ENCODE measurements at regions of chr1 and their contacts with region 1.

Region 1: DNA sequence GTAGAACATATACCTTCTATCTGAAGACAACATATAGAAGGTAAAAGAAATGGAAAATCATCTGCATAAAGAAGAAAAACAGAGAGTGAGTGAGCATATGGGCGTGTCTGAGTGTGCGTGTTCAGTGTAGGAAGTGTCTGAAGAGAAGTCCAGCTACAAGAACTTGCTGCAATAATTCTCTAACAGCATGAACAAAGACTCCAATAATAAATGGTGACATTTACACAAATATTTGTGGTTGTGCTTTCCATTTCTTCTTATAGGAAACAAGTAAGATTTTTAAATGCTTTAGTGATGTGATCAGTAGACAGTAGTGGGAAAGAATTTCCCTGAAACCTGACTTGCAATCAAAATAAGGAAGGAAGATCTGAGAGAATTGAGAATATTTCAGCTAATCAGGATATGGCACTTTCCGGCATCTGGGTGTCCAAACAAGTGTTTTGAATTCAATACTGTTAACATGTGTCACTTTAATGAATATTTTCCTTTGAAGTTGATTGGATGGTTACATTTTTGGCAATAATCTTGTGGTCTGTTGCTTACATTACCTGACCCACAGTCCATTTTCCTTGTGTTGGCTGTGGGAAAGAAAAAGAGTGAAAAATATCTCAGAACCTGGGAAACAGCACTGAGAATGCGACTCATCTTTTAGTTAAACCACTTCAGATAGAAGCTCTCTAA is 154.0 kb downstream of the TGFB2 start:
- DNase-seq: peak; percentile 63
- H3K4me3 Mint-ChIP-seq: peak overlapping the region; percentile 59
- H3K27ac Mint-ChIP-seq: peak overlapping the region; percentile 93
- H3K4me1 Mint-ChIP-seq: peaks cover 35% of the 10 kb centered on the region
- H3K27me3 Mint-ChIP-seq: no peaks in the 10 kb centered on the region
- CTCF ChIP-seq: no peak

Region 2: DNA sequence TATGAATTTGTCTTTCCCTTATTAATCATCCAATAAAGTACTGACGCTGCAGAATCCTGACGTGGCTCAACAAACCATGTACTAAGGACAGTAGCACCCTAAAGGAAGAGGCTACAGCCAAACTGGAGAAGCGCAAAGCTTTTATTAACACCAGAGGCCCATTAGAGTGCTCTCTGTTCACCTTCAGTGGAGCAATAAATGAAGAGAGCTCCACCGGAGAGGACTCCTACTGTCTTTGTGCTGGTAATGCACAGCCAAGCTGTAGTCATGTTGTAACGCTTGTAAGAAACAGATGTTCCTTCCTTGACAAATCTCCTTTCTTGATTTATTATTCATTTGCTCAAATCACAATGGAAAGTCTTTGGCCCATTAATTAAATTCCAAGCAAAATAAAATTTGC is 434.7 kb before region 1 on chr1:
- CTCF ChIA-PET with region 1: no interaction called
- POLR2A ChIA-PET with region 1: no interaction called
- intact Hi-C with region 1: no loop called
- DNase-seq: no peak
- H3K4me3 Mint-ChIP-seq: no peak overlapping the region
- H3K27ac Mint-ChIP-seq: no peak overlapping the region
- H3K4me1 Mint-ChIP-seq: no peaks in the 10 kb centered on the region
- H3K27me3 Mint-ChIP-seq: peaks cover 71% of the 10 kb centered on the region
- CTCF ChIP-seq: no peak

Region 3: DNA sequence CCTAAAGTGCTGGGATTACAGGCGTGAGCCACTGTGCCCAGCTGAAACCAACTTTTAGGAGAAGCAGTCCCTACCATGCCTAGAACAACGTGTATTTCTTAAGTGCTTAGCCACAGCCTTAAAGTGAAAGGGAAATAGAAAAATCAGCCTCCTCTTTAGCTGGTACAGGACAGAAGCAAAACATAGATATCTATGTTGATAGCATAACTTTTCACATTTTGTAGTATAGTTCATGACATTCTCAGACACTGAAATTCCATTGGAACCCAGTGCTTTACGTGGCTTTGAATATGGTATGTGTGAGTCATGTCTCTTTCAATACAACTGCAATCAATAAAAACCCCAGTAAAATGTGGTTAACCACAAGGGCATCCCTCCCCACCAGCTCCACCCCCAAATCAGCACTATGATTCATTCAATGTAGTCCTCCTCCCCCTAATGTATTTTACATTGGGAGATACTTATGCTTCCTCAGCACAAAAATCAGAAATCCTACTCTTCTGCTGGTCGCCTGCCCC is 121.9 kb before region 1 on chr1:
- CTCF ChIA-PET with region 1: interaction called, 6 read pairs
- POLR2A ChIA-PET with region 1: interaction called, 6 read pairs
- intact Hi-C with region 1: loop called (anchors 1 kb)
- DNase-seq: peak; percentile 99
- H3K4me3 Mint-ChIP-seq: peak overlapping the region; percentile 39
- H3K27ac Mint-ChIP-seq: peak overlapping the region; percentile 88
- H3K4me1 Mint-ChIP-seq: peaks cover 74% of the 10 kb centered on the region
- H3K27me3 Mint-ChIP-seq: no peaks in the 10 kb centered on the region
- CTCF ChIP-seq: no peak

Region 4: DNA sequence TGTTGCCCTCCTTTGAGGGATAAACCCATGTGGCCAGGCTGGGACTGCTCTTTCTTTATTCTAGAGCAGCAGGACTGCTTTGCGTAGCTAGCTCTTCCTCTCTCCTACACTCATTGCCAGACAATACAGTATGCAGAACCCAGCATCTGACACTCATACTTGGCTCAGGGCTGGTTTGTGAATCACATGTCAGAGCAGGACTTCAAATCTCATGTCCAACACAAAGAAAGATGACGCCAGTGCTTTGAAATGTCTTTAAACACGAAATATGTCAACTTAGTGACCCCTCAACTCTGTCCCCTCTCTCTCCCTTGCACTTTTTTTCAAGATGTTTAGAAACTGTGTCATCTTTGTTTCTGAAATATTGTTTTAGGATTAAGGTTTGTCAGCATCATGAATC is 19.0 kb before region 1 on chr1:
- CTCF ChIA-PET with region 1: interaction called, 3 read pairs
- POLR2A ChIA-PET with region 1: interaction called, 40 read pairs
- intact Hi-C with region 1: no loop called
- DNase-seq: peak; percentile 87
- H3K4me3 Mint-ChIP-seq: no peak overlapping the region
- H3K27ac Mint-ChIP-seq: peak overlapping the region; percentile 29
- H3K4me1 Mint-ChIP-seq: peaks cover 59% of the 10 kb centered on the region
- H3K27me3 Mint-ChIP-seq: no peaks in the 10 kb centered on the region
- CTCF ChIP-seq: no peak

Region 5: GRCh38 chr1:218521375-218522169 is 22.4 kb after region 1 on chr1:
- CTCF ChIA-PET with region 1: interaction called, 4 read pairs
- POLR2A ChIA-PET with region 1: interaction called, 11 read pairs
- intact Hi-C with region 1: no loop called
- DNase-seq: peak; percentile 92
- H3K4me3 Mint-ChIP-seq: no peak overlapping the region
- H3K27ac Mint-ChIP-seq: no peak overlapping the region
- H3K4me1 Mint-ChIP-seq: peaks cover 13% of the 10 kb centered on the region
- H3K27me3 Mint-ChIP-seq: no peaks in the 10 kb centered on the region
- CTCF ChIP-seq: peak; percentile 90

Region 6: GRCh38 chr1:218546309-218546708 is 47.2 kb after region 1 on chr1:
- CTCF ChIA-PET with region 1: interaction called, 10 read pairs
- POLR2A ChIA-PET with region 1: interaction called, 3 read pairs
- intact Hi-C with region 1: no loop called
- DNase-seq: peak; percentile 42
- H3K4me3 Mint-ChIP-seq: no peak overlapping the region
- H3K27ac Mint-ChIP-seq: no peak overlapping the region
- H3K4me1 Mint-ChIP-seq: no peaks in the 10 kb centered on the region
- H3K27me3 Mint-ChIP-seq: no peaks in the 10 kb centered on the region
- CTCF ChIP-seq: peak; percentile 46

Region 7: DNA sequence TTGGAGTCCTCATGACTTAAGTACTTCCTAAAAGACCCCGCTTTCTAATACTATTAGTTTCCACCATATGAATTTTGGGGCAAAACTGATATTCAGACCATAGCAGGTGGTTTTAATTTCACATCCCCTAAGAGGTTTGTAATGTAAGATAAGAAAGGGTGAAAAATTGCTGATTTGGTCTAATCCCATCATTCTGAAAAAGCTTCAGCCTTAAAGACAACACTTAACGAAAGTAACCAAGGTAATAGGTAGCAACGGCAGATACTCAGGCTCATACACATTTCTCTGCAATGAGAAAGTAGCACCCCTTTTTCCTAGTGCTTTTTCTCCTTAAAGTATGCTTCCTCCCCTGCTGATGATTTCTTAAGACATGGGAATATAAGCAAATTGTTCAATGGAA is 297.6 kb after region 1 on chr1:
- CTCF ChIA-PET with region 1: no interaction called
- POLR2A ChIA-PET with region 1: no interaction called
- intact Hi-C with region 1: no loop called
- DNase-seq: no peak
- H3K4me3 Mint-ChIP-seq: no peak overlapping the region
- H3K27ac Mint-ChIP-seq: no peak overlapping the region
- H3K4me1 Mint-ChIP-seq: no peaks in the 10 kb centered on the region
- H3K27me3 Mint-ChIP-seq: no peaks in the 10 kb centered on the region
- CTCF ChIP-seq: no peak

Measured in MCF 10A (cell line).